ENCODE measurements at regions of chr1 and their contacts with region 1.

Region 1: GRCh38 chr1:246566128-246566812 is at the starts of genes CNST and TFB2M:
- DNase-seq: peak; percentile 96
- ATAC-seq: peak; percentile 84
- H3K4me3 Mint-ChIP-seq: peak within 1 kb of the TSS; percentile 83
- H3K27ac Mint-ChIP-seq: peak within 1 kb of the TSS; percentile 94
- H3K4me1 Mint-ChIP-seq: peaks cover 42% of the 10 kb centered on the region
- H3K27me3 Mint-ChIP-seq: no peaks in the 10 kb centered on the region
- total RNA-seq, gene CNST: 23.6 to 24.2 TPM
- total RNA-seq, gene TFB2M: 14.1 to 17.3 TPM

Region 2: GRCh38 chr1:244652699-244653466 is 1913.4 kb before region 1 on chr1 and contains the start of gene DESI2:
- CTCF ChIA-PET with region 1: no interaction called
- POLR2A ChIA-PET with region 1: no interaction called
- intact Hi-C with region 1: loop called in 1 of 2 experiments (anchors 2 kb)
- DNase-seq: peak; percentile 98
- ATAC-seq: peak; percentile 96
- H3K4me3 Mint-ChIP-seq: peak within 1 kb of the TSS; percentile 76
- H3K27ac Mint-ChIP-seq: peak within 1 kb of the TSS; percentile 95
- H3K4me1 Mint-ChIP-seq: peaks cover 19% of the 10 kb centered on the region
- H3K27me3 Mint-ChIP-seq: no peaks in the 10 kb centered on the region
- total RNA-seq, gene DESI2: 24.5 to 26.0 TPM

Region 3: DNA sequence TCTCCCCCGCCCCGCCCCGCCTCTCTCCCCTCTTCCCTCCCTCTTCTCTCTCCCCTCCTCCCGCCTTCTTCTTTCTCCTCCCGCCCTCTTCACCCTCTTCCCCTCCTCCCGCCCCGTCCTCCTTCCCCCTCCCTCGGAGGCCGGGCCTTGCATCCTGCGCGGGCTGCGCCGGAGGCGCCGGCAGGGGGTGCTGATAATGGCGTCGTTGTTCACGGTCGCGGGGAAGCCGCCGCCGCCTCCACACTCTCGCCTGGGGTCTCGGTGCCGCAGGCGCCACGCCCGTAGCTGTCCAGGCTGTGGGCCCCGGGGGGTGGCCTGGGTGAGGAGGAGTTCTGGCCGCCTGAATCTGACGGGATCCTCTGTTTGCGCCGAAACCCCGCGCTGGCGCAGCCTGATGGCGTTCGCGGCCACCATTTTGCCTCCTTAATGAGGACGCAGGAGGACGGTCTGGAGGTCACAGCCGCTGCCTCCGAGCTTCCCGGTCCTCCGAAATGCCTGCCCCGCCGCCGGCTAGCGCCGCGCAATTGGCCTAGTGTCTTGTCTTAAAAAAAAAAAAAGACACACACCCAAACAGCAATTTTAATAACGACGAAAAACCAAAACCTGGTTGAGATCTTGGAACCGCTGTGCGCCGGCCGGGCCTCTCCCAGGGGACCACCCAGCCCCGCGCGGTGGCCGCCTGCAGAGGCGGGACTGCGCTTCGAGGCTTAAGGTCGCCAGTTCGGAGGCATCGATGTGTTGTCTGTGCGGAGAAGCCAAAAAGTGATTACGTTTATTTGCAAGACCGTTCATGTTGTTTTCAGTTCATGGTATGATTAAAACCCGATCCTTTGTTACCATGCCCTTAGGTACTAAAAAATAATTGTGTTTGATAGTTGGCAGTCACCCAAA is 1595.4 kb before region 1 on chr1:
- CTCF ChIA-PET with region 1: no interaction called
- POLR2A ChIA-PET with region 1: no interaction called
- intact Hi-C with region 1: loop called in 1 of 2 experiments (anchors 1 kb)
- DNase-seq: peak; percentile 96
- ATAC-seq: peak; percentile 84
- H3K4me3 Mint-ChIP-seq: peak overlapping the region; percentile 92
- H3K27ac Mint-ChIP-seq: peak overlapping the region; percentile 97
- H3K4me1 Mint-ChIP-seq: peaks cover 15% of the 10 kb centered on the region
- H3K27me3 Mint-ChIP-seq: no peaks in the 10 kb centered on the region

Region 4: DNA sequence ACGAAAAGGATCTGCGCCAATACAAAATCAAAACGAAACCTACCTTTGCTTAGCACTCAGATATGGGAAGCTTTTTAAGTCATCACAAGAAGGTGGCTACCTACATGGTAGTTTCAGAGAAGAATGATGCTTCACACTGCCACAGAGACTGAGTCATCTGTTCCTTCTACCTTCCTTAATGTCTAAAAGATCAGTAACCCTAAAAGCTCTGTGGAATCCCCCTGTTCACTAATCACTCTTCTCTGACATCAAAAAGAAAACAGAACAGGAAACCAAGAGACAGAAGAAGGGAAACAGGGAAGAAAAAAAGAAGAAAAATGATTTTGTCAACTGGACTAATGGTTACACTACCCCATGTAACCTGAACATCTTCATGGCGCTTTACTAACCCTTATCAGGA is 236.4 kb before region 1 on chr1:
- CTCF ChIA-PET with region 1: interaction called, 3 read pairs
- POLR2A ChIA-PET with region 1: no interaction called
- intact Hi-C with region 1: loop called in 1 of 2 experiments (anchors 1 kb)
- DNase-seq: peak; percentile 60
- ATAC-seq: peak; percentile 92
- H3K4me3 Mint-ChIP-seq: peak overlapping the region; percentile 3
- H3K27ac Mint-ChIP-seq: peak overlapping the region; percentile 63
- H3K4me1 Mint-ChIP-seq: peaks cover 51% of the 10 kb centered on the region
- H3K27me3 Mint-ChIP-seq: no peaks in the 10 kb centered on the region

Region 5: GRCh38 chr1:246602194-246602593 is 35.9 kb after region 1 on chr1:
- CTCF ChIA-PET with region 1: interaction called, 4 read pairs
- POLR2A ChIA-PET with region 1: no interaction called
- intact Hi-C with region 1: loop called in 1 of 2 experiments (anchors 2 kb)
- DNase-seq: peak; percentile 41
- ATAC-seq: peak; percentile 89
- H3K4me3 Mint-ChIP-seq: no peak overlapping the region
- H3K27ac Mint-ChIP-seq: peak overlapping the region; percentile 49
- H3K4me1 Mint-ChIP-seq: peaks cover 48% of the 10 kb centered on the region
- H3K27me3 Mint-ChIP-seq: no peaks in the 10 kb centered on the region

Region 6: GRCh38 chr1:246699095-246699735 is 132.9 kb after region 1 on chr1:
- CTCF ChIA-PET with region 1: no interaction called
- POLR2A ChIA-PET with region 1: no interaction called
- intact Hi-C with region 1: loop called (anchors 1 to 2 kb)
- DNase-seq: peak; percentile 92
- ATAC-seq: peak; percentile 99
- H3K4me3 Mint-ChIP-seq: peak overlapping the region; percentile 1
- H3K27ac Mint-ChIP-seq: peak overlapping the region; percentile 48
- H3K4me1 Mint-ChIP-seq: peaks cover 5% of the 10 kb centered on the region
- H3K27me3 Mint-ChIP-seq: no peaks in the 10 kb centered on the region

Region 7: GRCh38 chr1:247103859-247104591 is 537.8 kb after region 1 on chr1 and contains the start of gene ZNF669:
- CTCF ChIA-PET with region 1: no interaction called
- POLR2A ChIA-PET with region 1: no interaction called
- intact Hi-C with region 1: loop called (anchors 2 to 10 kb)
- DNase-seq: peak; percentile 97
- ATAC-seq: peak; percentile 100
- H3K4me3 Mint-ChIP-seq: peak within 1 kb of the TSS; percentile 86
- H3K27ac Mint-ChIP-seq: peak within 1 kb of the TSS; percentile 90
- H3K4me1 Mint-ChIP-seq: peaks cover 19% of the 10 kb centered on the region
- H3K27me3 Mint-ChIP-seq: peaks cover 16% of the 10 kb centered on the region
- total RNA-seq, gene ZNF669: 6.9 to 8.8 TPM

Region 8: GRCh38 chr1:247172996-247173395 is 606.7 kb after region 1 on chr1:
- CTCF ChIA-PET with region 1: no interaction called
- POLR2A ChIA-PET with region 1: no interaction called
- intact Hi-C with region 1: no loop called
- DNase-seq: no peak
- ATAC-seq: no peak
- H3K4me3 Mint-ChIP-seq: no peak overlapping the region
- H3K27ac Mint-ChIP-seq: no peak overlapping the region
- H3K4me1 Mint-ChIP-seq: peaks cover 10% of the 10 kb centered on the region
- H3K27me3 Mint-ChIP-seq: no peaks in the 10 kb centered on the region

Measured in activated CD4-positive, alpha-beta T cell treated with anti-CD3 and anti-CD28 coated beads for 36 hours (primary cell).